ENCODE measurements at regions of chr4 and their contacts with region 1.

Region 1: GRCh38 chr4:13907255-13907751 is 279.8 kb upstream of the BOD1L1 start:
- DNase-seq: peak; percentile 85
- H3K4me3 ChIP-seq: no peak overlapping the region
- CTCF ChIP-seq: peak; percentile 41

Region 2: GRCh38 chr4:13559413-13559812 is 347.9 kb before region 1 on chr4:
- in situ Hi-C with region 1: no loop called
- DNase-seq: peak; percentile 39
- H3K4me3 ChIP-seq: no peak overlapping the region
- CTCF ChIP-seq: no peak

Region 3: GRCh38 chr4:15001869-15002658 is 1094.8 kb after region 1 on chr4 and contains the start of gene CPEB2:
- in situ Hi-C with region 1: loop called (anchors 5 kb)
- DNase-seq: peak; percentile 89
- H3K4me3 ChIP-seq: peak within 1 kb of the TSS; percentile 88
- CTCF ChIP-seq: no peak

Measured in astrocyte of the cerebellum (primary cell).